ENCODE measurements at regions of chr18 and their contacts with region 1.

Region 1: GRCh38 chr18:79378542-79379250 is 17.0 kb upstream of the NFATC1 start:
- DNase-seq: peak; percentile 81
- H3K4me3 ChIP-seq: no peak overlapping the region
- H3K27ac ChIP-seq: no peak overlapping the region
- H3K4me1 ChIP-seq: no peaks in the 10 kb centered on the region
- H3K27me3 ChIP-seq: no peaks in the 10 kb centered on the region
- CTCF ChIP-seq: peak; percentile 96

Region 2: DNA sequence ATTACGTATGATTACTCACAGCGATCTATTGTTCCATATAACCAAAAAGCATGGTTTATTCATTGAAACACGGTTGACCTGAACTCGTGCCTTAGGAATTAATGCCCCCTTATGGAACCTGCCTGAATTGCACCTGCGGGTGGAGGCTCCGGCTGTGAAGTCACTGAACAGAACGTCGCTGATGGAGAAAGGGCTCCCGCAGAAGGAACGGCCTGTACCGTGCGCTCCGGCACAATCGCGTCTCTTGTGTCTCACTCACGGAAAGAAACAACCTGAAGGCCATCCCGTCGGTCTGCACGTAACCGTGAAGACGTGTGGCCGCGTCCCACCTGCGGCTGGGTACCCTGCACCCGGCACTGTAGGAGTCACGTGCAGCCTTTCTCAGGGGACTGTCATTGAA is 150.2 kb after region 1 on chr18:
- intact Hi-C with region 1: loop called (anchors 5 kb)
- DNase-seq: peak; percentile 67
- H3K4me3 ChIP-seq: no peak overlapping the region
- H3K27ac ChIP-seq: no peak overlapping the region
- H3K4me1 ChIP-seq: no peaks in the 10 kb centered on the region
- H3K27me3 ChIP-seq: no peaks in the 10 kb centered on the region
- CTCF ChIP-seq: peak; percentile 83

Region 3: GRCh38 chr18:79644006-79644665 is 265.4 kb after region 1 on chr18:
- intact Hi-C with region 1: loop called (anchors 1 kb)
- DNase-seq: peak; percentile 48
- H3K4me3 ChIP-seq: no peak overlapping the region
- H3K27ac ChIP-seq: no peak overlapping the region
- H3K4me1 ChIP-seq: no peaks in the 10 kb centered on the region
- H3K27me3 ChIP-seq: no peaks in the 10 kb centered on the region
- CTCF ChIP-seq: peak; percentile 92

Region 4: DNA sequence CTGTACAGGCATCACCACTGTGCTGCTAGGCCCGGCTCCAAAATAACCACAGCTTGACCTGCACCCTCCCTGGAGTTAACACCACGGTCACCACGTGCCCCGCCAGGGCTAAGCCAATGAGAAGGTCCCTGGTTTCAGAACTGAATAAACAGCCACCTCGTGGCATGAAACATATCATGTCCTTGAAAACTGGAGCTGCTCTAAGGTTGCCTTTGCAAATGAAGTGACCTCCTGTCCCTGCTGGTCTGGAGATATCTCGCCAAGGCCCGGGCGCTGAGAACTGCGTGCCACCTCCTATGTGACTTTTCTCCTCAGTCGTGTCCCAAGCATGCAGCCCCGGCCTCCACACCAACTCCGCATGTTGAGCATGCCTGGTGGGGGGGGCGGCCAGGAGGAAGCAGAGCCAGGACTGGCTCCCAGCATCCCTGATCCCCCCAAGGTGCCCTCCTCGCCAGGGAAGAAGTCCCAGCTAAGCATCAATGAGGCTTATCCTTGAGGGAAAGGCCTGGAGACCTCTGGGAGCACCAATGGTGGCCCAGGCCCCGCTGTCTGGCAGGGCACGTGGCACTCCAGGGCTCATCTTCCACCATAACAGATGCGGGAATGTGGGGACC is 402.7 kb after region 1 on chr18:
- intact Hi-C with region 1: no loop called
- DNase-seq: no peak
- H3K4me3 ChIP-seq: no peak overlapping the region
- H3K27ac ChIP-seq: no peak overlapping the region
- H3K4me1 ChIP-seq: no peaks in the 10 kb centered on the region
- H3K27me3 ChIP-seq: no peaks in the 10 kb centered on the region
- CTCF ChIP-seq: no peak

Measured in colonic mucosa (tissue), 4 donors.